ENCODE measurements at regions of chr1 and their contacts with region 1.

Region 1: GRCh38 chr1:41980827-41981653 is 62.3 kb upstream of the HIVEP3 start:
- DNase-seq: peak in 2 of 9 donors; percentile 1 to 3
- ATAC-seq: peak; percentile 58
- H3K4me3 ChIP-seq: no peak overlapping the region
- H3K4me3 Mint-ChIP-seq: peak overlapping the region in 4 of 10 donors; percentile 15 to 54 (median 44)
- H3K27ac ChIP-seq: no peak overlapping the region
- H3K27ac Mint-ChIP-seq: peak overlapping the region in 2 of 9 donors; percentile 43 to 77
- H3K4me1 ChIP-seq: peaks cover 6 to 14% of the 10 kb centered on the region in 2 donors
- H3K4me1 Mint-ChIP-seq: peaks cover 12 to 34% (median 19%) of the 10 kb centered on the region in 7 donors
- H3K27me3 ChIP-seq: no peaks in the 10 kb centered on the region
- H3K27me3 Mint-ChIP-seq: no peaks in the 10 kb centered on the region

Region 2: GRCh38 chr1:41812051-41812450 is 169.0 kb before region 1 on chr1:
- CTCF ChIA-PET with region 1: no interaction called
- POLR2A ChIA-PET with region 1: no interaction called
- intact Hi-C with region 1: loop called in 1 of 2 experiments (anchors 5 kb)
- DNase-seq: peak in 6 of 9 donors; percentile 23 to 63 (median 47)
- ATAC-seq: peak; percentile 77
- H3K4me3 ChIP-seq: no peak overlapping the region
- H3K4me3 Mint-ChIP-seq: peak overlapping the region in 1 of 10 donors; percentile 29
- H3K27ac ChIP-seq: no peak overlapping the region
- H3K27ac Mint-ChIP-seq: peak overlapping the region in 2 of 9 donors; percentile 21 to 66
- H3K4me1 ChIP-seq: peaks cover 5 to 28% of the 10 kb centered on the region in 2 donors
- H3K4me1 Mint-ChIP-seq: peaks cover 17 to 48% (median 26%) of the 10 kb centered on the region in 7 donors
- H3K27me3 ChIP-seq: no peaks in the 10 kb centered on the region
- H3K27me3 Mint-ChIP-seq: no peaks in the 10 kb centered on the region

Region 3: GRCh38 chr1:41936118-41936517 is 44.9 kb before region 1 on chr1:
- CTCF ChIA-PET with region 1: no interaction called
- POLR2A ChIA-PET with region 1: no interaction called
- intact Hi-C with region 1: loop called in 1 of 2 experiments (anchors 10 kb)
- DNase-seq: no peak
- ATAC-seq: no peak
- H3K4me3 ChIP-seq: no peak overlapping the region
- H3K4me3 Mint-ChIP-seq: no peak overlapping the region
- H3K27ac ChIP-seq: no peak overlapping the region
- H3K27ac Mint-ChIP-seq: no peak overlapping the region
- H3K4me1 ChIP-seq: no peaks in the 10 kb centered on the region
- H3K4me1 Mint-ChIP-seq: peaks cover 0 to 14% (median 8%) of the 10 kb centered on the region in 7 donors
- H3K27me3 ChIP-seq: no peaks in the 10 kb centered on the region
- H3K27me3 Mint-ChIP-seq: peaks cover 0 to 13% (median 0%) of the 10 kb centered on the region in 5 donors

Region 4: GRCh38 chr1:41963636-41964035 is 17.4 kb before region 1 on chr1:
- CTCF ChIA-PET with region 1: no interaction called
- POLR2A ChIA-PET with region 1: no interaction called
- intact Hi-C with region 1: no loop called
- DNase-seq: no peak
- ATAC-seq: no peak
- H3K4me3 ChIP-seq: no peak overlapping the region
- H3K4me3 Mint-ChIP-seq: no peak overlapping the region
- H3K27ac ChIP-seq: no peak overlapping the region
- H3K27ac Mint-ChIP-seq: no peak overlapping the region
- H3K4me1 ChIP-seq: no peaks in the 10 kb centered on the region
- H3K4me1 Mint-ChIP-seq: peaks cover 0 to 6% (median 0%) of the 10 kb centered on the region in 7 donors
- H3K27me3 ChIP-seq: no peaks in the 10 kb centered on the region
- H3K27me3 Mint-ChIP-seq: peaks cover 0 to 14% (median 0%) of the 10 kb centered on the region in 5 donors

Measured in naive thymus-derived CD4-positive, alpha-beta T cell (primary cell).